Uterus (tissue), 4 donors: ENCODE measurements at regions of chr11 and their contacts with region 1.

Region 1: DNA sequence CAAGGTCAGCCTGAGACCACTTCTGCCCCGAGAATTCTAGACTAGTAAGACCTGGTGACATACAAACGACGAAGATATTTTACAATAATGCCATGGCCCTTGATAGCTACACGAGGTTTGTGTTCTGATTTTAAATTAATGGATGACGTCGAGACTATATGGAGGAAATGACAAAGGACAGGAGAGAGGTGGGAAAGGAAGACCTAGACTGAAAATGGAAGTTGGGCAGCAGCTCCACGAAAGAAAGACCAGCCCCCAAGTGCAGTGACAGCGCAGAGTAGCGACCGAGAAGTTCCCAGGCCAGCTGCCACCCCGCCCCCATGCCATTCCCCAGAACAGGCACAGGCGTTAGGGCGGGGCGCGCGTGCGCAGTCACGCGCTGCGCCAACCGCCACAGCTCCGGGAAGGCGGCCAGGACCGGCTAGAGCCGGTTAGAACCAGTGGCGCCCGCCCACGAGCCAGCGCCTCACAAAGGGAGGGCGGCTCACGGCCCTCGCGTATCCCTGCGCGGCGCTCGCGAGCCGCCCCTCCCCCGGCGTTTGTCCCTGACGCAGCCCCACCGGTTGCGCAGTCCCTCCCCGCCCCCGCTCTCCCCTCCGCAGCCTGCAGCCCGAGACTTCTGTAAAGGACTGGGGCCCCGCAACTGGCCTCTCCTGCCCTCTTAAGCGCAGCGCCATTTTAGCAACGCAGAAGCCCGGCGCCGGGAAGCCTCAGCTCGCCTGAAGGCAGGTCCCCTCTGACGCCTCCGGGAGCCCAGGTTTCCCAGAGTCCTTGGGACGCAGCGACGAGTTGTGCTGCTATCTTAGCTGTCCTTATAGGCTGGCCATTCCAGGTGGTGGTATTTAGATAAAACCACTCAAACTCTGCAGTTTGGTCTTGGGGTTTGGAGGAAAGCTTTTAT is 1.5 kb upstream of the MALAT1 start:
- DNase-seq: peak; percentile 99
- H3K4me3 ChIP-seq: peak overlapping the region; percentile 85 to 90
- H3K27ac ChIP-seq: peak overlapping the region; percentile 96 to 97
- H3K4me1 ChIP-seq: peaks cover 17 to 30% of the 10 kb centered on the region in 2 donors
- H3K27me3 ChIP-seq: no peaks in the 10 kb centered on the region
- CTCF ChIP-seq: peak in 3 of 4 experiments; percentile 11 to 38 (median 36)
- POLR2A ChIP-seq: peak; percentile 93 to 97

Region 2: DNA sequence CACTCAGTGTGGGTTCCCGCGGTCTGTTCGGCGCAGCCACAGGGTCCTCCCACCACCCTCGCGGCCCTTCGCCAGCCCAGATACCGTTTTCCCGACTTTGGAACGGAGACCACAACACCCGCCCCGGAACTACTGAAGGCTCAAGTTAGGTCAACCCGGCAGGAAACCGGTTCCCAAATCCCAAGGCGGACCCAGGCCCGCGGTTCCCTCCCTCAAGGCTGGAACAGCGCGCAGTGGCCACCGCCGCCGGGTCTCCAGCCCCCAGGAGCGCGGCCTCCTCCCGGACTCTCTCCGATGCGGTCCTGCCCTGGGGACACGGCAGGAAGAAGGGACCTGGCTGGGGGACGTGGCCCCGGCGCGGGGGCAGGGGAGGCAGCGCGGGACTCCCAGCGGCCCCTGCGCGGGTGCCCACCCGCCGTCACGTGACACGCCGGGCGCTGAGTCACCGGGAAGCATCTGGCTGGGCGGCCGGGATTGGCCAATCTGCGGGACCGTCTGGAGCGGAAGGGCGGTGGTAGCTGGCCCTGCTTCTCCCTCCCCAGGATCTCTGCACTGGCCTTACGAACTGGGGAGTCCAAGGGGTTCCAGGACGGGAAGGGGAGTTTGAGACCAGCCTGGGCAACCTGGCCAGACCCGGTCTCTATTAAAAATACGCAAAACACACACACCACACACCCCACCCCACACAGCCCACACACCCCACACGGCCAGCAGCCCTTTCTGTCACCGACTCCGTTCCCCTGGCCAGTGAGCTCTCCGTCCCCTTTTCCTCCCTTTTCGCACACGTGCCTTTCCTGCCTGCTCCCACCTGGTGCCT is 20.0 kb before region 1 on chr11:
- intact Hi-C with region 1: loop called (anchors 2 kb)
- DNase-seq: peak; percentile 97
- H3K4me3 ChIP-seq: peak overlapping the region; percentile 57 to 64
- H3K27ac ChIP-seq: peak overlapping the region; percentile 97 to 98
- H3K4me1 ChIP-seq: peaks cover 13 to 22% of the 10 kb centered on the region in 2 donors
- H3K27me3 ChIP-seq: no peaks in the 10 kb centered on the region
- CTCF ChIP-seq: peak in 1 of 4 experiments; percentile 14
- POLR2A ChIP-seq: peak; percentile 96 to 100